ENCODE measurements at regions of chr22 and their contacts with region 1.

Region 1: GRCh38 chr22:33302049-33302545 is 243.9 kb upstream of the SYN3 start:
- DNase-seq: peak; percentile 20 to 52
- ATAC-seq: peak in 2 of 3 donors; percentile 52 to 69
- H3K4me3 ChIP-seq: no peak overlapping the region
- H3K4me3 Mint-ChIP-seq: no peak overlapping the region
- H3K27ac ChIP-seq: no peak overlapping the region
- H3K27ac Mint-ChIP-seq: no peak overlapping the region
- H3K4me1 ChIP-seq: peaks cover 16% of the 10 kb centered on the region
- H3K4me1 Mint-ChIP-seq: peaks cover 0 to 8% of the 10 kb centered on the region in 2 donors
- H3K27me3 ChIP-seq: no peaks in the 10 kb centered on the region
- H3K27me3 Mint-ChIP-seq: peaks cover 4 to 8% of the 10 kb centered on the region in 2 donors
- CTCF ChIP-seq: peak; percentile 50

Region 2: GRCh38 chr22:33270596-33270995 is 31.5 kb before region 1 on chr22:
- intact Hi-C with region 1: no loop called
- DNase-seq: no peak
- ATAC-seq: no peak
- H3K4me3 ChIP-seq: no peak overlapping the region
- H3K4me3 Mint-ChIP-seq: no peak overlapping the region
- H3K27ac ChIP-seq: peak overlapping the region; percentile 18
- H3K27ac Mint-ChIP-seq: no peak overlapping the region
- H3K4me1 ChIP-seq: peaks cover 4% of the 10 kb centered on the region
- H3K4me1 Mint-ChIP-seq: no peaks in the 10 kb centered on the region
- H3K27me3 ChIP-seq: no peaks in the 10 kb centered on the region
- H3K27me3 Mint-ChIP-seq: no peaks in the 10 kb centered on the region
- CTCF ChIP-seq: no peak

Region 3: DNA sequence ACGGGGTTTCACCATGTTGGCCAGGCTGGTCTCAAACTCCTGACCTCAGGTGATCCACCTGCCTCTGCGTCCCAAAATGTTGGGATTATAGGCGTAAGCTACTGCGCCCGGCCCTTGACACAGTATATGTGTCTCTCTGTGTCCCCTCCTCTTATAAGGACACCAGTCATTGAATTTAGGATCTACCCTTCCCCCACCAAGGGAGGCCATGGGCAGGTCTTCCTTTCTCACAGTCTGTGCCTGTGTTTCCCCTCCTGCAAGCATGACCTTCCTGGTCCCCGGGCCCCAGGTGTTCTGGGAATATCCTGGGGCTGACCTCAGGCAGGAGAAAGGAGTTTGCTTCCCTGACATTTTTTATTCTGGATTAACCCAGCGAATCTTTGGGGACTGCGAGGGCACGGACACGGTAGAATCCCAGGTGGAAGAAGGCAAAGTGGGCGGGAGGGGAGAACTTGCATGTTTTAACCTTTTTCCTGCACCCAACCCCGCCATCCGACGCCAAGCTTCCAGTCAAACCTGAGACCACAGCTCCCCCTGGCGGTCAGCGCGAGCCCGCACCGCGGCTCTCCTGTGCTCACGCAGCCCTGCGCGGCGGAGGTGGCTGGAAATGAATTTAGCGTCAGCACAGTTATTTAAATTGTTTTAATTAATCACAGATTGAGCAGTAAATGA is 1721.7 kb after region 1 on chr22:
- intact Hi-C with region 1: loop called (anchors 10 kb)
- DNase-seq: peak; percentile 38 to 52
- ATAC-seq: peak in 2 of 3 donors; percentile 46 to 56
- H3K4me3 ChIP-seq: no peak overlapping the region
- H3K4me3 Mint-ChIP-seq: no peak overlapping the region
- H3K27ac ChIP-seq: no peak overlapping the region
- H3K27ac Mint-ChIP-seq: no peak overlapping the region
- H3K4me1 ChIP-seq: no peaks in the 10 kb centered on the region
- H3K4me1 Mint-ChIP-seq: peaks cover 0 to 4% of the 10 kb centered on the region in 2 donors
- H3K27me3 ChIP-seq: no peaks in the 10 kb centered on the region
- H3K27me3 Mint-ChIP-seq: peaks cover 12 to 26% of the 10 kb centered on the region in 2 donors
- CTCF ChIP-seq: peak; percentile 61

Region 4: GRCh38 chr22:35150183-35151107 is 1848.3 kb after region 1 on chr22:
- intact Hi-C with region 1: loop called (anchors 10 kb)
- DNase-seq: peak; percentile 41 to 67
- ATAC-seq: peak; percentile 36 to 68 (median 51)
- H3K4me3 ChIP-seq: no peak overlapping the region
- H3K4me3 Mint-ChIP-seq: no peak overlapping the region
- H3K27ac ChIP-seq: no peak overlapping the region
- H3K27ac Mint-ChIP-seq: no peak overlapping the region
- H3K4me1 ChIP-seq: no peaks in the 10 kb centered on the region
- H3K4me1 Mint-ChIP-seq: peaks cover 4 to 8% of the 10 kb centered on the region in 2 donors
- H3K27me3 ChIP-seq: no peaks in the 10 kb centered on the region
- H3K27me3 Mint-ChIP-seq: peaks cover 17 to 18% of the 10 kb centered on the region in 2 donors
- CTCF ChIP-seq: peak; percentile 64